Left colon (tissue), 2 donors: ENCODE measurements at regions of chr7 and their contacts with region 1.

Region 1: GRCh38 chr7:107150375-107151073 is 18.3 kb upstream of the HBP1 start:
- DNase-seq: peak; percentile 52 to 90
- ATAC-seq: peak; percentile 73

Region 2: GRCh38 chr7:106793015-106793975 is 357.2 kb before region 1 on chr7:
- intact Hi-C with region 1: loop called in 1 of 2 experiments (anchors 5 kb)
- DNase-seq: no peak
- ATAC-seq: peak; percentile 44

Region 3: DNA sequence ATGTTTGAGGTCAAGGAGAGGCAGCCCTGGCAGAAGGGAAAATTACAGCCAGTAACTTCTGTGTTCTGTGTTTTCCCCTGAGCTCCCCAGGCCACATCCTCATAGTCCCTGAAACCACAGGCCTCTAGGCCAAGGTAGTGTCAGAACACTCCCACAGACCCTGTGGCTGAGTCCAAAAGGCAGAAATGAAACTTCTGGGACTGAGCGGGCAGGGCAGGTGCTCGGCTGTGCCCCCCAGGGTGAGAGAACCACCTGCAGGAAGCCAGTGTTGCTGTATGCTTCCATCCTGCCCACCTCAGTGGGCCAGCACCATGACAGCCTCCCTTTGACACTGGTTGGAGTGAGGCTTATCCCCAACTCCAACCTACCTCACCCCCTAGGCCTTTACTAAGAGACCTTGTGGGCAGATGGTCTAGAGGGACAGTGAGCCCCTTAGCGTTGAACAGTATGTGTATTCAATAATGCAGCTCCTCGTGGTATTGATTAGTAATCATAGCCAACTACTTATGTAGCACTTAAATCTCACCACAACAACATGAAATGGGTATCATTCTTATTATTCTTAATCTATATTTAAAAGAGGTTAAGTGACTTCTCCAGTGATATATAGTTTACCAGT is 255.2 kb before region 1 on chr7:
- intact Hi-C with region 1: no loop called
- DNase-seq: peak; percentile 10 to 39
- ATAC-seq: no peak

Region 4: DNA sequence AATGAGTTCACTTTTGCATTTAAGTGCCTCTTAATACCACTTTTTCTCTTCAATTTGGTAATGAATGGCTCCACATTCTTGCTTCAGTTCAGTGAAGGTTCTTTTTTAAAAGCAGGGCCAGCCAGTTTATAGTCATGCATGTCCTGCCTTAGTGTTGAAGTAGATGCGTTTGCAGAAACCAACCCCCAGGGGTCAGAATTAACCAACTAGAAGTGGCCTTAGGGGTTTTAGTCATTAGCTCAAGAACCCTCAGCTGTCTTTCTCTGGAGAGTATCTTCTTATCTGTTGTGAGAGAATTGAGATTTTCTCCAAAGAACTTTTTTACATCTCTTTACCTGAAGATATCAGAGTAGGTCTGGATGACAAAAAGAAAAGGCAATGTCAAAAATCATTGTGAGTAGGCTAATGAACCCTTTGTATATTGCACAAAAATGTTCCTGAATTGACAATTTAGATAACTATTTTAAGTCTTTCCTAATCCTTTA is 203.2 kb before region 1 on chr7:
- intact Hi-C with region 1: loop called (anchors 5 to 10 kb)
- DNase-seq: peak in 1 of 2 donors; percentile 39
- ATAC-seq: peak; percentile 76

Region 5: GRCh38 chr7:107078517-107078966 is 72.0 kb before region 1 on chr7:
- intact Hi-C with region 1: no loop called
- DNase-seq: no peak
- ATAC-seq: no peak